CD8-positive, alpha-beta T cell (primary cell): ENCODE measurements at regions of chr2 and their contacts with region 1.

Region 1: DNA sequence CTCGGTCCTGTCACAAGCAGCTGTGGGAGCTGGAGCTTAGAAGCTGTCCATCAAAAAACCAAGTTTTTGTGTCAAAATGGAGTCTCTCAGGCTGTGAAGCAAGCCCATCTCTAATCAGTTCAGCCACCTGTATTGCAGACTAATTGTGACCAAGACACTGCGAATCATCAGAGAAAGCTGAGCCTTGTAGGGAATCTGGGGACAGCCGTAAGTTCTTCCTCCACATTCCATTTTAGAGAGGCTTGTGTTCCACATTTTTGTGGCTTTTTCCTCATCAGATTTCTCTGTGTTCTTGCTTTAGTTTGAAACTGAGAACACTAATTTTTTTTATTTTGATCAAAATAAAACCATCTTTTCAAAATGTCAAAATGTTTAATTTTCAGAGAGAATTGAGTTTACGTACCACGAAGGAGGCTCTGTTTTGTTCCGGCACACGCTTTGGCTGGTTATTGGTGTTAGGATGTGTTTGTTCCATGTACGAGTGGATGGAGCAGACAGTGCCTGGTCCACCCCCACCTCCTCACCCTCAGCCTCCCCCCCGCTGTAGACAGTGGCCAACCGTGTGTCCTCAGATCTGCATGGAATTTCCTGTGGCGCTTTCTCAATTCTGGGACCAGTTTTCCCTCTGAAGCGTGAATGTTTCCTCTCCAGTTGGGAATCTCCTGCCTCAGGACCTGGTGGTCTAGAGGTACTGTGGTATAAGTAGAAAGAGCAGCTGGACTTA is 140.8 kb downstream of the AGAP1 start:
- DNase-seq: no peak
- ATAC-seq: no peak
- H3K4me3 ChIP-seq: no peak overlapping the region
- H3K4me3 Mint-ChIP-seq: no peak overlapping the region
- H3K27ac ChIP-seq: no peak overlapping the region
- H3K27ac Mint-ChIP-seq: no peak overlapping the region
- H3K4me1 ChIP-seq: no peaks in the 10 kb centered on the region
- H3K4me1 Mint-ChIP-seq: no peaks in the 10 kb centered on the region
- H3K27me3 ChIP-seq: no peaks in the 10 kb centered on the region
- H3K27me3 Mint-ChIP-seq: peaks cover 9% of the 10 kb centered on the region
- CTCF ChIP-seq: no peak

Region 2: DNA sequence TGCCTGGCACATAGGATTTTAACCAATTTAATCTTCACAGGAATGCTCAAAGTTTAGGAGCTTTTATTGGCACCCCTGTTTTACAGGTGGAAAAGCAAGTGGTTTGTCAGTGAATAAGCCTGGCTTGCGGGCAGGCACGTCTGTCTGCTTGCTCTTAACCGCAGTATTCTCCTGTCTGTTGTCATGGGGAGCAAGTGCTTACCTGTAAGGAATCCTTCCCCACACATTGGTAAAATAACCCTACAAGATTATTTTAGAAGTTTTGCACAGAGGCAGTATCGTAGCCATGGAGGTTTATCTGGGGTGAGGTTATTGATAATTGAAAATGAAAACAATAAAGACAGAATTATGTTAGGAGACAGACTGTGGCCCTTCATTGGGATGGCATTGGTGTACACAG is 34.2 kb after region 1 on chr2:
- CTCF ChIA-PET with region 1: interaction called, 4 read pairs
- POLR2A ChIA-PET with region 1: no interaction called
- intact Hi-C with region 1: loop called in 1 of 2 experiments (anchors 1 kb)
- DNase-seq: no peak
- ATAC-seq: no peak
- H3K4me3 ChIP-seq: no peak overlapping the region
- H3K4me3 Mint-ChIP-seq: peak overlapping the region; percentile 50
- H3K27ac ChIP-seq: no peak overlapping the region
- H3K27ac Mint-ChIP-seq: no peak overlapping the region
- H3K4me1 ChIP-seq: no peaks in the 10 kb centered on the region
- H3K4me1 Mint-ChIP-seq: peaks cover 13% of the 10 kb centered on the region
- H3K27me3 ChIP-seq: peaks cover 0 to 6% of the 10 kb centered on the region in 2 experiments
- H3K27me3 Mint-ChIP-seq: peaks cover 52% of the 10 kb centered on the region
- CTCF ChIP-seq: no peak